Activated CD4-positive, alpha-beta memory T cell treated with anti-CD3 and anti-CD28 coated beads for 36 hours (primary cell): ENCODE measurements at regions of chr14 and their contacts with region 1.

Region 1: GRCh38 chr14:54356172-54356571 is 40.6 kb upstream of the CDKN3 start:
- DNase-seq: no peak
- H3K4me3 Mint-ChIP-seq: no peak overlapping the region
- H3K27ac Mint-ChIP-seq: no peak overlapping the region
- H3K4me1 Mint-ChIP-seq: no peaks in the 10 kb centered on the region
- H3K27me3 Mint-ChIP-seq: peaks cover 28% of the 10 kb centered on the region

Region 2: DNA sequence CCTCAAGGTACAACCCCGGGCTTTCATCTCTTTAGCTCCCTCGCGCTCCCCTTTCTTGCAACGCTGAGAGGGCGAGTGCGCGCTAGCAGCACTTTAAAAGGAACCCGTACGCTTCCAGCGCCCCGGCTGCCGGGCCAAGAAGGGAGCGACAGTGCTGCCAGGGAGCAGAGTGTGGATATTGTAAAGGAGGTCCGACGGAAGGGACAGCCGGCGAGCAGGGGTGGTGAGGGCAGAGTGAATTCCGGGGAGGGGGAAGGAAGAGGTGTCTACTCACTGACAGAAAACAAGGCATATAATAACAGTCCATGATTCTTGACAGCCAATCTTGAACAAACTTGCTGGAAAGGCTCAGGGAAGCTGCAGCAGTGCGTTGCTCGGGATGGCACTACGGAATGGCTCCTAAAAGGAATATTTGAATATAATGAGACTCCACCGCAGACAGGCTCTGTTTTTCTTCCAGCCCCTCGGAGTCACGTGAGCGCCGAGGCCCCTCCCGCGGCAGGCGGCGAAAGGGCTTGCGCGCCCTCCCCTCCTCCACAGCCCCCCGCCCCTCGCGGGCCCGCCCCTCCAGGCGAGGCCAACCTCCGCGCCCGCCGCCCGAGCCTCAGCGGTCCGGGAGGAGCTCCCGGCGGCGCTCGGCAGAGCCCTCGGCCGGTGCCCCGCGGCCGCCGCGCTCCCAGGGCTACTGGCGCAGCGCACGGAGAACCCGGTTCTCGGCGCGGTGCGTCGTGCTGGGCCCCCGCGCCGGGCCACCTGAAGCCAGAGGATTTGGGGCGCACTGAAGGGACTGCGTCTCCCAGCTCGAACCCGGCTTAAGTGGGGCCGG is 403.0 kb before region 1 on chr14:
- CTCF ChIA-PET with region 1: no interaction called
- POLR2A ChIA-PET with region 1: no interaction called
- intact Hi-C with region 1: loop called (anchors 10 kb)
- DNase-seq: peak; percentile 52
- H3K4me3 Mint-ChIP-seq: peak overlapping the region; percentile 73
- H3K27ac Mint-ChIP-seq: no peak overlapping the region
- H3K4me1 Mint-ChIP-seq: peaks cover 30% of the 10 kb centered on the region
- H3K27me3 Mint-ChIP-seq: peaks cover 53% of the 10 kb centered on the region

Region 3: DNA sequence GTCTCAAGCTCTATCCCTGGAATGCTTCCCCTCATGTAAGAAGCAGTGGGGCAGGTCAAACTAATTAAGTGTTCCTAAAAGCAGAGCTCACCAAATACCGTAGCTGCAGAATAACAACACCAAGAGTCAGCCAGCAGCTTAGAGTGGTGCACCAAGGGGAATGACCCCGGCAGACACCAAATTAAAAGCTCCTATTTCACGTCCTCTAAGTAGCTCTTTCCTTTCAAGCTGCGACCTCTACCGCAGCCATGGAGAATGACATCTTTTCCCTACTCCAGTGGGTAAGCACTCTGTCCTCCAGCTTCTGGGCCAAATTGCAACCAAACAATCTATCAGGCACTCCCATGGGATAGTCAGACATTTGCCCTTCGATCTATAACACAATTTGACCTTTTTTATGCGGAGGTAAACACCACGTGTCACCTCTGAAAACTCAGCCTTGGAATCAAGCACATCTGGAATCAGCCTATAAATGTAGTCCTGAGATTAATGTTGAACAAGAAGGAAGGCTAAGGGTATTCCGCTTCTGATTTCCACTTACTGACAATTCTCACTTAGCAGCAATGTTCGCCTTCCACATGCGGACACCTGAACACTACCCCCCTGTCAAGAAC is 27.0 kb before region 1 on chr14:
- CTCF ChIA-PET with region 1: no interaction called
- POLR2A ChIA-PET with region 1: no interaction called
- intact Hi-C with region 1: no loop called
- DNase-seq: peak; percentile 21
- H3K4me3 Mint-ChIP-seq: no peak overlapping the region
- H3K27ac Mint-ChIP-seq: no peak overlapping the region
- H3K4me1 Mint-ChIP-seq: no peaks in the 10 kb centered on the region
- H3K27me3 Mint-ChIP-seq: peaks cover 5% of the 10 kb centered on the region